CD4-positive, alpha-beta memory T cell (primary cell): ENCODE measurements at regions of chr2 and their contacts with region 1.

Region 1: GRCh38 chr2:31413862-31414550 is 536 bp downstream of the XDH start:
- DNase-seq: peak in 2 of 5 donors; percentile 14 to 15
- H3K4me3 ChIP-seq: no peak overlapping the region
- H3K4me3 Mint-ChIP-seq: no peak overlapping the region
- H3K27ac ChIP-seq: no peak overlapping the region
- H3K27ac Mint-ChIP-seq: peak overlapping the region in 1 of 7 donors; percentile 1
- H3K4me1 ChIP-seq: peaks cover 10% of the 10 kb centered on the region
- H3K4me1 Mint-ChIP-seq: peaks cover 9 to 29% (median 21%) of the 10 kb centered on the region in 4 donors
- H3K27me3 ChIP-seq: no peaks in the 10 kb centered on the region
- H3K27me3 Mint-ChIP-seq: peaks cover 0 to 3% of the 10 kb centered on the region in 2 donors

Region 2: DNA sequence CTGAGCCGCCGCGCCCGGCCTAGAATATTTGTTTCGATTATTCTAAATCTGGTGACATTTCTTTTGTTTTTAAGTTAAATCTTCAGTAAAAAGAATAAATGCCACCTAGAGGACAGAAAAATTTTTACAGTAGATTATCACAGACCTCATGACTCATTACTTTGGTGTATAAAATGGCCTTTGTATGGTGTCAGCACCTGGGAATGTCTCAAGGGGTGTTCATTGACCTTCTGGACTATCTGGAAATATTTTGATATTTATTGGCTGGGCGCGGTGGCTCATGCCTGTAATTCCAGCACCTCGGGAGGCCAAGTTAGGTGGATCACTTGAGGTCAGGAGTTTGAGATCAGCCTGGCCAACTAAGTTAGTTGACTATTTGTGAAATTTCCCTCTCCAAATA is 721.4 kb after region 1 on chr2:
- CTCF ChIA-PET with region 1: no interaction called
- POLR2A ChIA-PET with region 1: no interaction called
- intact Hi-C with region 1: loop called (anchors 5 kb)
- DNase-seq: peak in 4 of 5 donors; percentile 5 to 19 (median 6)
- H3K4me3 ChIP-seq: no peak overlapping the region
- H3K4me3 Mint-ChIP-seq: no peak overlapping the region
- H3K27ac ChIP-seq: no peak overlapping the region
- H3K27ac Mint-ChIP-seq: peak overlapping the region in 3 of 7 donors; percentile 29 to 70 (median 42)
- H3K4me1 ChIP-seq: no peaks in the 10 kb centered on the region
- H3K4me1 Mint-ChIP-seq: peaks cover 0 to 3% (median 0%) of the 10 kb centered on the region in 4 donors
- H3K27me3 ChIP-seq: no peaks in the 10 kb centered on the region
- H3K27me3 Mint-ChIP-seq: no peaks in the 10 kb centered on the region